ENCODE measurements at regions of chr3 and their contacts with region 1.

Region 1: GRCh38 chr3:128426128-128426921 is 40.4 kb downstream of the DNAJB8 start:
- DNase-seq: peak; percentile 43 to 57
- H3K4me3 ChIP-seq: peak overlapping the region in 1 of 2 donors; percentile 14
- H3K27ac ChIP-seq: no peak overlapping the region
- H3K4me1 ChIP-seq: peaks cover 4 to 7% of the 10 kb centered on the region in 2 donors
- H3K27me3 ChIP-seq: no peaks in the 10 kb centered on the region
- CTCF ChIP-seq: peak; percentile 59 to 99 (median 99)
- POLR2A ChIP-seq: no peak

Region 2: DNA sequence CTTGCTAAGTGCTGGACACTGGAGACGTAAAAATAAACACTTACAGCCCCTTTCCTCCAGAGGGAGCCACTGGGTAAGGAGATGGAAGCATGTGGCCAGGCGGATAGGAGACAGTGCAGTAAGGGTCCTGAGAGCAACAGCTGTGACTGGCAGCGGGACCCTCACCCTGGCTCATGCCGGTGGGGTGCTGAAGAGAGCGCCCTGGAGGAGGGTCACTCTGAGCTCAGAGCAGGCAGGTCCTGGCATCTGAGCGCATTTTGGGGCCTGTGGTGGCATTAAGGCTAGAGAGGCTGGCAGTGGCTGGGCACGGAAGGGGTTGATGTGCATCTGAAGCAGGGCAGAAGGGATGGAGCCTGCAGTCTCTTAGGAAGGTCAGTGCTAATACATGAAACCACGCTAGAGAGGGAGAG is 358.1 kb before region 1 on chr3:
- intact Hi-C with region 1: no loop called
- DNase-seq: no peak
- H3K4me3 ChIP-seq: no peak overlapping the region
- H3K27ac ChIP-seq: no peak overlapping the region
- H3K4me1 ChIP-seq: no peaks in the 10 kb centered on the region
- H3K27me3 ChIP-seq: no peaks in the 10 kb centered on the region
- CTCF ChIP-seq: peak in 3 of 4 experiments; percentile 13 to 34 (median 27)
- POLR2A ChIP-seq: no peak

Region 3: DNA sequence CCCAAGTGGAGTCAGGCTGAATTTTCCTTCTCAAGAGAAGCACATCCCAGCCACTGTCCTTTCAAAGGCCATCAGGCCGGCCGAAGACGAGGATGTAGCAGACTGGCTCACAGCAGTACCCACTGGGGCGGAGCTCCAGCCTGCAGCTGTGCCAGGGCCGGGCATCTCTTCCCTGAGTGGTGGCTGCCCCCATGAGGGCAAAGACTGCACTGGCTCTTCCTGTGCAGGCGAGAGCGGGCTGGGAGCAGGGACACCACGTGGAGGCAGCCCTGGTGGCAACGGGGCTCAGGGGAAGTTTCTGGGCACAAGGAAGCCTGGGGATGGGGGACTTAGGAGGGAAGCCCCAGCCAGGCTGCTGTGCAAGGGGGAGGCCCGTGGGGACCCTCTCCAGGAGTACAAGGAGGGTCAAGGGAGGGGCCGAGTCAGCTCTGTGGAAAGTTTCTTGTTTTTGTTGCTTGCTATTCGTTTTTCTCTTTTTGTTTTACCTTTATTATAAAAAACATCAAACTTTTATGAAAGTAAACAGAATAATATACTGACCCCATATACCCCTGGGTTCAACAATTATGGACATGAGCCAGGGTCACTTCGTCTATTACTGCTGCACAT is 158.2 kb after region 1 on chr3:
- intact Hi-C with region 1: loop called (anchors 10 kb)
- DNase-seq: peak; percentile 66 to 67
- H3K4me3 ChIP-seq: no peak overlapping the region
- H3K27ac ChIP-seq: no peak overlapping the region
- H3K4me1 ChIP-seq: no peaks in the 10 kb centered on the region
- H3K27me3 ChIP-seq: no peaks in the 10 kb centered on the region
- CTCF ChIP-seq: peak; percentile 57 to 91 (median 71)
- POLR2A ChIP-seq: peak in 1 of 2 donors; percentile 10

Region 4: GRCh38 chr3:128607710-128608048 is 181.4 kb after region 1 on chr3:
- intact Hi-C with region 1: loop called (anchors 5 kb)
- DNase-seq: no peak
- H3K4me3 ChIP-seq: peak overlapping the region; percentile 44 to 45
- H3K27ac ChIP-seq: peak overlapping the region; percentile 44 to 66
- H3K4me1 ChIP-seq: no peaks in the 10 kb centered on the region
- H3K27me3 ChIP-seq: no peaks in the 10 kb centered on the region
- CTCF ChIP-seq: no peak
- POLR2A ChIP-seq: no peak